Activated T-helper 2 cell treated with anti-CD3 and anti-CD28 coated beads, Interferon-gamma antibody, Interleukin-2, Interleukin-4, amounts not matched to agents 10 μg/mL and 5 μg/mL and 100 μg/mL, durations not matched to agents 14 hours and 24 hours and 36 hours (primary cell): ENCODE measurements at regions of chr5 and their contacts with region 1.

Region 1: GRCh38 chr5:173057062-173057924 is 1.1 kb downstream of the CREBRF start:
- DNase-seq: peak; percentile 99
- H3K4me3 Mint-ChIP-seq: peak overlapping the region; percentile 94
- H3K27ac Mint-ChIP-seq: peak overlapping the region; percentile 96
- H3K4me1 Mint-ChIP-seq: peaks cover 19% of the 10 kb centered on the region
- H3K27me3 Mint-ChIP-seq: no peaks in the 10 kb centered on the region

Region 2: GRCh38 chr5:171387345-171387969 is 1669.8 kb before region 1 on chr5 and contains the start of gene NPM1:
- intact Hi-C with region 1: loop called (anchors 2 kb)
- DNase-seq: peak; percentile 97
- H3K4me3 Mint-ChIP-seq: peak within 1 kb of the TSS; percentile 94
- H3K27ac Mint-ChIP-seq: peak within 1 kb of the TSS; percentile 97
- H3K4me1 Mint-ChIP-seq: peaks cover 31% of the 10 kb centered on the region
- H3K27me3 Mint-ChIP-seq: peaks cover 3% of the 10 kb centered on the region
- total RNA-seq, gene NPM1: 2,774 and 3,051 TPM in 2 replicates

Region 3: GRCh38 chr5:172173831-172174153 is 883.5 kb before region 1 on chr5:
- intact Hi-C with region 1: loop called (anchors 5 kb)
- DNase-seq: peak; percentile 70
- H3K4me3 Mint-ChIP-seq: peak overlapping the region; percentile 84
- H3K27ac Mint-ChIP-seq: peak overlapping the region; percentile 79
- H3K4me1 Mint-ChIP-seq: peaks cover 82% of the 10 kb centered on the region
- H3K27me3 Mint-ChIP-seq: no peaks in the 10 kb centered on the region

Region 4: GRCh38 chr5:172770675-172771438 is 286.4 kb before region 1 on chr5 and contains the start of gene DUSP1:
- intact Hi-C with region 1: loop called (anchors 2 kb)
- DNase-seq: peak; percentile 93
- H3K4me3 Mint-ChIP-seq: peak within 1 kb of the TSS; percentile 86
- H3K27ac Mint-ChIP-seq: peak within 1 kb of the TSS; percentile 97
- H3K4me1 Mint-ChIP-seq: peaks cover 39% of the 10 kb centered on the region
- H3K27me3 Mint-ChIP-seq: no peaks in the 10 kb centered on the region
- total RNA-seq, gene DUSP1: 8.9 and 9.7 TPM in 2 replicates

Region 5: GRCh38 chr5:172984243-172984953 is 72.9 kb before region 1 on chr5:
- intact Hi-C with region 1: loop called (anchors 1 kb)
- DNase-seq: peak; percentile 71
- H3K4me3 Mint-ChIP-seq: peak overlapping the region; percentile 98
- H3K27ac Mint-ChIP-seq: peak overlapping the region; percentile 99
- H3K4me1 Mint-ChIP-seq: peaks cover 18% of the 10 kb centered on the region
- H3K27me3 Mint-ChIP-seq: no peaks in the 10 kb centered on the region

Region 6: DNA sequence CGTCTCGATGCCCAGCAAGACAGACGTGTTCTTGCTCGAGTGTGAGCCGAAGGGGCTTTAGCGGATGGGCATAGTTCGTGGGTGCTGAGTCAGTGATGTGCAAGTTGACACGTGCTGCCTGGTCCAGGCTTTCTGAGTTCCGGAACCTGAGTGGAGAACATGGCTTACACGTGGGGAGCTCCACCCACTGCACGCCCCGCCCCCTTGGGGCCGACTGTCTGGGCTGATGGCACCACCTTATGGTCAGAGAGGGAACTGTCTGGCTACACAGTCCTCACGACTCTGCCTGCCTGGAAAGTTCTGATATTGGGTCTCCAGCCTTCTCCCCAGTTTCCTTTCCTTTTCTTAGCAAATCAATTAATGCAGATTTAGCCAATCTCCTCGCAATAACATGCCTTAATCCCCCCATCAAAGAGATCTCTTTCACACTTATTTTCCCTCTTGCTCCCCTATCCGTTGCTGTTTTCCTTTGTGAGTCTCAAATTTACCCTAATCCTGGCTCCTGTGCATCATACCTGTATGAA is 274.7 kb after region 1 on chr5:
- intact Hi-C with region 1: loop called (anchors 5 kb)
- DNase-seq: peak; percentile 84
- H3K4me3 Mint-ChIP-seq: peak overlapping the region; percentile 23
- H3K27ac Mint-ChIP-seq: peak overlapping the region; percentile 48
- H3K4me1 Mint-ChIP-seq: peaks cover 27% of the 10 kb centered on the region
- H3K27me3 Mint-ChIP-seq: peaks cover 7% of the 10 kb centered on the region